GM13977 (cell line): ENCODE measurements at regions of chr5 and their contacts with region 1.

Region 1: GRCh38 chr5:149371296-149371962 is 7.7 kb downstream of the IL17B start:
- DNase-seq: peak; percentile 85
- CTCF ChIP-seq: peak; percentile 87

Region 2: DNA sequence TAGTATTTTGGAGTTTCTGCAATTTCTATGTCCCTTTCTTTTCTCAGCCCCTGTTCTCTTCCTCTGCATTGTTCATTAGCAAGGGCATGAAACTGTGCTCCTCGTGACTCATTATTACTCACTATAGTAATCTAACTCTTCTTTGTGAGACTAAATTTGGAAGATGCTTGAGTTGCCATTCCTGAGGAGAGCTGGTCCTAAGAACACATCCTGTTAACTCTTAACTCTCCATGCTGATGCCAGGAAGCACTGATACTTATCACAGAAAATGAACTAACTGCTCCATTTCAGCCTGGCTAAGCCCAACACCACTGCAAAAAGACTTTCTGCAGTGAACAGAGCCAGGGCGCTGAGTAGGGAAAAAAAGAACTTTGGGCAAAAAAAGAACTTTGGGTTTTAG is 190.4 kb after region 1 on chr5:
- in situ Hi-C with region 1: loop called (anchors 10 kb)
- DNase-seq: no peak
- CTCF ChIP-seq: no peak